HepG2 (cell line): ENCODE measurements at regions of chr14 and their contacts with region 1.

Region 1: DNA sequence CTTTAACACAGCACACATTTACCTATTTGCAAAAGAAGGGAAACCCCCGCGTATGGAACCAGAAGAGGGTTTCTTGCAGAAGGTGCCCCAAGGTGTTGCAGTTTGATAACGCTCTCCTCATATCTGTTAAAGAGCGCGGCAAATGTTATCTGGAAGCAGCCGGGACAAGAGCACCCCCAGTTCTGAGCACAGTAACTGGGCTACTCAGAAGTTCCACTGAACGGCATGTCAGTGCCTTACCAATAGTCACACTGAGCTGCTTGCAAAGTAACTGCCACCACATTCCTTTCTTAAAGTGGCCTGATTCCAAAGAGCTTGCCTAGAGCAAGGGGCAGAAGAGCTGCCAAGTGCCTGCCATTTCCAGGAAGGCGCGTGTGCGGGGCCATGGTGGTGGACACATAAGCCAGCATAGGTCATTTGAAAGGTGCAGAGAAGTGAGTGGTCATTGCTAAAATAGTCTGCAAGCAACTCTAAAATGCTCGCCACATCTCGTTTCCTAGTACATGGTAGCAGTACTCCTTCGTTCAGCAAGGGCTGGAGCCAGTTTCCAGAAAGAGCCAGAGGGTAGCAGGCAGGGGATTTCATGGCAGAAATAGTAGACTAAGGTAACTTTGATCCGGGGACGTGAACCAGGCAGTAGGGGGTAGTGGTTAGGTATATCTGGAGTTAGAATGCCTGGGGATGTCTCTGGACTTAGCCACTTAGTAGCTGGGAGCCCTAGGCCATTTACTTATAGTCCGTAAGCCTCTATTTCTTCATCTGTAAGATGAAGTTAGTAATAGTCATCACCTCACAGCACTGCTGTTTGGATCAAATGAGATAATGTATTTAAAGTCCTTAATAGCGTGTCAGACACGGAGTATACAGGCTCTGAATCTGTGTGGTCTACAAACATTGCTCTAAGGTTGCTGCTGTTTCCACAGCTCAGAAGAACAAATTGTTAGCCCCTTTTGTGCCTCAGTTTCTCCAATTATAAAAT is 37.6 kb downstream of the SPTB start:
- DNase-seq: no peak
- ATAC-seq: no peak
- H3K4me3 ChIP-seq: no peak overlapping the region
- H3K27ac ChIP-seq: no peak overlapping the region
- H3K4me1 ChIP-seq: no peaks in the 10 kb centered on the region
- H3K27me3 ChIP-seq: peaks cover 3 to 28% of the 10 kb centered on the region in 2 experiments
- CTCF ChIP-seq: no peak
- EP300 ChIP-seq: no peak
- POLR2A ChIP-seq: no peak
- RAD21 ChIP-seq: no peak

Region 2: DNA sequence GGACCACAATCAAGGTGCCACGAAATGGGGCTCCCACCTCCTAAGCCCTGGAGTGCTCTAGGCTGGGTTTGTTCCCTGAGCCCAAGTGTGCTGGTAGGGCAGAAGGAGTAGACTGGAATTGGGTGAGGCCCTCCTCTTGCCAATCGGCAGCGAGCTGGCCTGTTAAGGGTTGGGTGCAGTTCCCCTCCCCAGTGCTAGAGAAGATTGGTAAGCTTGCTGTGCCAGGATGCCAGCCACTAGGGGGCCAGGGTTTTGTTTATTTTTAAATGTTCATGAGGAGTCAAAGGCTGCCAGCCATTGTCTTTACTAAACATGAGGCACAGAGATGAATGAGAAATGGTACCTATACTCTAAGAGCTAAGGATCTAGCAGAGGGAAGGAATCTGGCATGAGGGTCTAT is 42.1 kb before region 1 on chr14:
- CTCF ChIA-PET with region 1: no interaction called
- POLR2A ChIA-PET with region 1: no interaction called
- in situ Hi-C with region 1: no loop called
- intact Hi-C with region 1: loop called (anchors 1 kb)
- DNase-seq: peak; percentile 35
- ATAC-seq: peak; percentile 61
- H3K4me3 ChIP-seq: no peak overlapping the region
- H3K27ac ChIP-seq: no peak overlapping the region
- H3K4me1 ChIP-seq: peaks cover 11% of the 10 kb centered on the region; the same call in 1 of the 2 replicates
- H3K27me3 ChIP-seq: peaks cover 2 to 3% of the 10 kb centered on the region in 2 experiments; a peak in 3 of 5 replicates
- CTCF ChIP-seq: peak; percentile 35
- EP300 ChIP-seq: no peak
- POLR2A ChIP-seq: no peak
- RAD21 ChIP-seq: no peak

Region 3: DNA sequence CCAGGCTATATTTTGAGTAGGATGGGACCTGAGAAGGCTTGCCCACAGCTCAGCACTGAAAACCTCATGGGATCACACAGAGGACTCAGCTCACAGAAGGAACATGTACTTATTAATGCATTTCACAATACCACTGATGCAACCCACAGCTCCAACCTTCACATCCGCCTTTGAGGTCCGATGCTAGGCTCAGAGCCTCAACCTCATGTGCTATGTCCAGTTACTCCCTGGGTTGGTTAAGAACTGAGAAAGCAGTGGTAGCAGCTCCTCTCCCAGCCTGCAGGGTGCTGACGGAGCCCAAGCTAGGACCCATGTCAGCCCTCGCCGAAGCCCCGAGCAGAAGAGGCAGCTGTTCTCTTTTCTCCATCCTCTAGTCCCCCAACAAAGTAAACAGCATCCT is 15.2 kb before region 1 on chr14:
- CTCF ChIA-PET with region 1: no interaction called
- POLR2A ChIA-PET with region 1: no interaction called
- in situ Hi-C with region 1: no loop called
- intact Hi-C with region 1: no loop called
- DNase-seq: no peak
- ATAC-seq: peak; percentile 37
- H3K4me3 ChIP-seq: no peak overlapping the region
- H3K27ac ChIP-seq: no peak overlapping the region
- H3K4me1 ChIP-seq: peaks cover 21% of the 10 kb centered on the region
- H3K27me3 ChIP-seq: peaks cover 5 to 53% of the 10 kb centered on the region in 2 experiments
- CTCF ChIP-seq: no peak
- EP300 ChIP-seq: no peak
- POLR2A ChIP-seq: no peak
- RAD21 ChIP-seq: no peak